ENCODE measurements at regions of chr17 and their contacts with region 1.

Region 1: DNA sequence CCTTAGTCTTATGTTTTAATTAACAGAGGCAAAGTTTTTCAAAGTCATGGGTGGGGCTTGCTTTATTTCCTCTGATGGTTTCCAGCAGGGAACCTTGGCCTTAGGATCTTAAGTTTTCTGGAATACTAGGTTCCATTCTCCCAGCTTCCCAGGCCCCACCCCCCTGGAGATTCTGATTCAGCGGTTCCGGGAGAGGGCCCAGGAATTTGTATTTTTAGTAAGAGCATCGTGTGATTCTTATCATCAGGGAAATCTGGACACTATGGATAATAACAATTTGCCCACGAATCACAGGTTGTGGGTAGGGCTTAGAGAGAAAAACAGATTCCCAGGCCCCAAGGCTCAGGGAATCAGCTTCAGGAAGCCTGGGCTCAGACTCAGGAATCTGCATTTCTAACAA is 263.6 kb downstream of the NTN1 start:
- DNase-seq: no peak
- ATAC-seq: no peak
- H3K4me3 ChIP-seq: no peak overlapping the region
- H3K4me3 Mint-ChIP-seq: no peak overlapping the region
- H3K27ac ChIP-seq: no peak overlapping the region
- H3K27ac Mint-ChIP-seq: no peak overlapping the region
- H3K4me1 ChIP-seq: peaks cover 1% of the 10 kb centered on the region
- H3K4me1 Mint-ChIP-seq: peaks cover 8% of the 10 kb centered on the region
- H3K27me3 ChIP-seq: no peaks in the 10 kb centered on the region
- H3K27me3 Mint-ChIP-seq: no peaks in the 10 kb centered on the region
- CTCF ChIP-seq: no peak

Region 2: GRCh38 chr17:9258115-9259015 is 26.5 kb before region 1 on chr17:
- CTCF ChIA-PET with region 1: no interaction called
- POLR2A ChIA-PET with region 1: no interaction called
- intact Hi-C with region 1: no loop called
- DNase-seq: no peak
- ATAC-seq: no peak
- H3K4me3 ChIP-seq: no peak overlapping the region
- H3K4me3 Mint-ChIP-seq: no peak overlapping the region
- H3K27ac ChIP-seq: no peak overlapping the region
- H3K27ac Mint-ChIP-seq: no peak overlapping the region
- H3K4me1 ChIP-seq: peaks cover under 1% of the 10 kb centered on the region
- H3K4me1 Mint-ChIP-seq: peaks cover 8% of the 10 kb centered on the region
- H3K27me3 ChIP-seq: no peaks in the 10 kb centered on the region
- H3K27me3 Mint-ChIP-seq: no peaks in the 10 kb centered on the region
- CTCF ChIP-seq: no peak

Region 3: DNA sequence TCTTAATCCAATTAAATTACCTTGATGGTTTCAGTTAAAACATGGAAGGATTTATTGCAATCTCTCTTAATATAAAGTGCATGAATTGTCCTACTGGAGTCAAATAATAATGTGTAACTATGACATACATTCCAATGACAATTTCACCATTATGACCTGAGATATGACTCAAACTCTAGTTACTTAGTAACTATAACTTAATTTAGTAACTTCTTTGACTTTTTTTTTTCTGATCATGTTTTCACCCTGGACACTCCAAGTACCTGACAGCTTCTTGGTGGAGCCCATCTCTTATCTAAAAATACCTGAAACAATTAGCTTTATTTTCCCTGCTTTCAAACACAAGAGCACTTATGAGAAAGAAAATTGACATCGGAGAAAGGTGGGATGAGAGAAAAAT is 167.1 kb after region 1 on chr17:
- CTCF ChIA-PET with region 1: no interaction called
- POLR2A ChIA-PET with region 1: no interaction called
- intact Hi-C with region 1: no loop called
- DNase-seq: no peak
- ATAC-seq: no peak
- H3K4me3 ChIP-seq: no peak overlapping the region
- H3K4me3 Mint-ChIP-seq: no peak overlapping the region
- H3K27ac ChIP-seq: no peak overlapping the region
- H3K27ac Mint-ChIP-seq: no peak overlapping the region
- H3K4me1 ChIP-seq: no peaks in the 10 kb centered on the region
- H3K4me1 Mint-ChIP-seq: no peaks in the 10 kb centered on the region
- H3K27me3 ChIP-seq: no peaks in the 10 kb centered on the region
- H3K27me3 Mint-ChIP-seq: no peaks in the 10 kb centered on the region
- CTCF ChIP-seq: no peak

Region 4: DNA sequence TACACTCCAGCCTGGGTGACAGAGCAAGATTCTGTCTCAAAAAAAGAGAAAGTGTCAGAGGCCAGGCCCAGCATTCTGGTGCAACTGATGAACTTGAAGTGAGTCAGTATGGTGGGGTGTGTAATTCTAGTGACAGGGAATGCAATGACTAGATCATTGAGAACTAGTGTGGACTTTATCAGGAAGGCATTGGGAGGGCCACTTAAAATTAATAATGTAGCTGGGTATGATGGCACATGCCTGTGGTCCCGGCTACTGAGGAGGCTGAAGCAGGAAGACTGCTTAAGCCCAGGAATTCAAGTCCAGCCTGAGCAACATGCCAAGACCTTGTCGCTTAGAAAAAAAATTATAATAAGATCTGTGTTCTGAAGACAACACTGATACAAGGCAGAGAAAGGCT is 199.9 kb after region 1 on chr17:
- CTCF ChIA-PET with region 1: no interaction called
- POLR2A ChIA-PET with region 1: no interaction called
- intact Hi-C with region 1: loop called in 1 of 2 experiments (anchors 5 kb)
- DNase-seq: no peak
- ATAC-seq: no peak
- H3K4me3 ChIP-seq: no peak overlapping the region
- H3K4me3 Mint-ChIP-seq: no peak overlapping the region
- H3K27ac ChIP-seq: no peak overlapping the region
- H3K27ac Mint-ChIP-seq: no peak overlapping the region
- H3K4me1 ChIP-seq: no peaks in the 10 kb centered on the region
- H3K4me1 Mint-ChIP-seq: no peaks in the 10 kb centered on the region
- H3K27me3 ChIP-seq: no peaks in the 10 kb centered on the region
- H3K27me3 Mint-ChIP-seq: no peaks in the 10 kb centered on the region
- CTCF ChIP-seq: no peak

Region 5: DNA sequence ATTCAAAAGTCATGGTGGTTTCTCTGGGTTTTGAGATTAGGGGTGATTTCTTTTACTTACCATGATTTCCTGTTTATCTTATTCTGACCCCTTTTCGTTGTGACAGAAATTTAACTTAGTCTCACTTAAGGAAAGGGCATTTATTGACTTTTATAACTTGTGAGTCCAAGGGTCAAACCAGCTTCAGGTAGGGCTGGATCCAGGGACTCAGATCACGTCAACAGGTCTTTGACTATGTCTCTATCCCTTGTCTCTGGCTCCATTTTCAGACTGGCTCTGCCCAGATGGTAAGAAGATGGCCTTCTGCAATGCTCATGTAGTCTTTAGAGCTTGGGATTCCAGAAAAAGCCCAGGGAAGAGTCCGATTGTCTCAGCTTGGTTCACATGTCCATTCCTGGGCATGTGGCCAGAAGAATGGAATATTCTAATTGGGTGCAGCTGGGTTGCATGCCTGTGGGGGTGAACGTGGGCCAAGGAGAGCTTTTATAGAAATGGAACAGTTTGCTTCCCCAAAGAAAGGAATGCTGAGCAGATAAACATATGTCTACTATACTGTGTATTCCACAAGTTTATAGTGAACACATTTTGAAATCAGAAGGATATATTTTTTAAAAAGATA is 373.8 kb after region 1 on chr17:
- CTCF ChIA-PET with region 1: no interaction called
- POLR2A ChIA-PET with region 1: no interaction called
- intact Hi-C with region 1: no loop called
- DNase-seq: no peak
- ATAC-seq: no peak
- H3K4me3 ChIP-seq: no peak overlapping the region
- H3K4me3 Mint-ChIP-seq: no peak overlapping the region
- H3K27ac ChIP-seq: no peak overlapping the region
- H3K27ac Mint-ChIP-seq: no peak overlapping the region
- H3K4me1 ChIP-seq: no peaks in the 10 kb centered on the region
- H3K4me1 Mint-ChIP-seq: no peaks in the 10 kb centered on the region
- H3K27me3 ChIP-seq: no peaks in the 10 kb centered on the region
- H3K27me3 Mint-ChIP-seq: peaks cover 7% of the 10 kb centered on the region
- CTCF ChIP-seq: no peak

Measured in CD8-positive, alpha-beta T cell (primary cell).